Heart right ventricle (tissue), 16 donors: ENCODE measurements at regions of chr18 and their contacts with region 1.

Region 1: GRCh38 chr18:32209685-32210445 is 20.0 kb downstream of the MEP1B start:
- DNase-seq: no peak
- ATAC-seq: no peak
- H3K4me3 ChIP-seq: no peak overlapping the region
- H3K27ac ChIP-seq: no peak overlapping the region
- H3K4me1 ChIP-seq: peaks cover 0 to 5% (median 0%) of the 10 kb centered on the region in 9 donors
- H3K27me3 ChIP-seq: no peaks in the 10 kb centered on the region
- CTCF ChIP-seq: no peak

Region 2: DNA sequence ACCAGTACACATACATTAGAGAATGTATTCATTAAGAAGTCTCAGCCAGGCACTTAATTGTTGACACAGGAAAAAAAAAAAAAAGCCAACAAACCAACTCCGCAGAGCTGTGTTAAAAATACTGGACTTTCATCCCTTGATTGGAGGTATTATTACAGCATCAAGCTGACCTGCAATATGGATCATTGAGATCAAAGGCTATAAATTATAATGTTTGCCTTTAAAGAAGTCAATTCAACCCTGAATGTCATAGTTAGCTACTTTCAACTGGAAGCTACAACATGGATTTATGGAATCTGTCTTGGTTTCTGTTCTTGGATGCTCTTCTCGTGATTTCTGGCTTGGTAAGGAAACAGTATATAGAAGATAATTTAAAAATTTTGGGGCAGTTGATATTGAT is 20.1 kb before region 1 on chr18 and contains the start of gene MEP1B:
- intact Hi-C with region 1: no loop called
- DNase-seq: no peak
- ATAC-seq: no peak
- H3K4me3 ChIP-seq: no peak within 1 kb of the TSS
- H3K27ac ChIP-seq: no peak within 1 kb of the TSS
- H3K4me1 ChIP-seq: no peaks in the 10 kb centered on the region
- H3K27me3 ChIP-seq: no peaks in the 10 kb centered on the region
- CTCF ChIP-seq: no peak
- total RNA-seq, gene MEP1B: 0.17 TPM in 1 of 10 donors, not detected in the others

Region 3: GRCh38 chr18:32238635-32239268 is 28.9 kb after region 1 on chr18:
- intact Hi-C with region 1: loop called in 1 of 10 experiments (anchors 2 kb)
- DNase-seq: no peak
- ATAC-seq: no peak
- H3K4me3 ChIP-seq: no peak overlapping the region
- H3K27ac ChIP-seq: no peak overlapping the region
- H3K4me1 ChIP-seq: no peaks in the 10 kb centered on the region
- H3K27me3 ChIP-seq: no peaks in the 10 kb centered on the region
- CTCF ChIP-seq: no peak

Region 4: DNA sequence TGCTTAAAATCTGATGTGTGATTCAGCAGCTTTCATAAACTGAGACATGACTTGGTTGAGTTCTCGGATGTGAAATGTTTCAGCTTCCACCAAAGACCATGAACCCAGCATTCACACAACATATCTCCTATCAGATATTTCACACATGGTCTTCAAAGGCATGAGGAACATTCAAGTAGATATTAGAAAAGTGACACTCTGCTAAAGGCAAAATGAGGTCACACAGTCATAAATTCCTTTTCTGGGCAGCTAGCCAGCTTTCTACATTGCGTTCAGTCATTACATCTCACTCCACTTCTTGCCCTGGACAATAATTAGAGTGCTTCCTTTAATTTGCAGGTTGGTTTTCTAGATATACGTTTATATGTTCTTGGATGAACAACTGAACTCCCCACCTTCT is 164.1 kb after region 1 on chr18:
- intact Hi-C with region 1: no loop called
- DNase-seq: peak in 1 of 2 donors; percentile 48
- ATAC-seq: peak in 6 of 8 donors; percentile 17 to 72 (median 50)
- H3K4me3 ChIP-seq: no peak overlapping the region
- H3K27ac ChIP-seq: peak overlapping the region in 3 of 10 donors; percentile 6 to 53 (median 52)
- H3K4me1 ChIP-seq: peaks cover 0 to 50% (median 21%) of the 10 kb centered on the region in 9 donors
- H3K27me3 ChIP-seq: no peaks in the 10 kb centered on the region
- CTCF ChIP-seq: no peak

Region 5: GRCh38 chr18:33495278-33495677 is 1285.4 kb after region 1 on chr18:
- intact Hi-C with region 1: no loop called
- DNase-seq: no peak
- ATAC-seq: peak in 1 of 8 donors; percentile 51
- H3K4me3 ChIP-seq: no peak overlapping the region
- H3K27ac ChIP-seq: no peak overlapping the region
- H3K4me1 ChIP-seq: no peaks in the 10 kb centered on the region
- H3K27me3 ChIP-seq: no peaks in the 10 kb centered on the region
- CTCF ChIP-seq: peak in 6 of 9 donors; percentile 21 to 44 (median 35)